ENCODE measurements at regions of chr12 and their contacts with region 1.

Region 1: DNA sequence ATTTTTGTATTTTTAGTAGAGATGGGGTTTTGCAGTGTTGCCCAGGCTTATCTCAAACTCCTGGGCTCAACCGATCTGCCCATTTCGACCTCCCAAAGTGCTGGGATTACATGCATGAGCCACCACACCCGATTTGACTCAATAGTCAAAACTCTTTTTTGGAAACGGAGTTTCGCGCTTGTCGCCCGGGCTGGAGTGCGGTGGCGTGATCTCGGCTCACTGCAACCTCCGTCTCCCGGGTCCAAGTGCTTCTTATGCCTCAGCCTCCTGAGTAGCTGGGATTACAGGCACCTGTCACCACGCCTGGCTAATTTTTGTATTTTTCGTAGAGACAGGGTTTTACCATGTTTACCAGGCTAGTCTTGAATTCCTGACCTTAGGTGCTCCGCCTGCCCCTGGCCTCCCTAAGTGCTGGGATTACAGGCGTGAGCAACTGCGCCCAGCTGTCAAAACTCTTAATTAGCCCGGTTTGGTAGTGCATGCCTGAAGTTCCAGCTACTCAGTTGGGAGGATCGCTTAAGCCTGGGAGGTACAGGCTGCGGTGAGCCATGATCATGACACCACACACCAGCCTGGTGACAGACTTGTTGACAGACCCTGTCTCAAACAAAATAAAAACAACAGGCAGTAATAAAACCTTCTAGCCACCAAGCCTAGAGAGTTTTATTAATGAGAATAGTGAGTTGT is 12.4 kb downstream of the MED21 start:
- DNase-seq: no peak
- H3K27ac ChIP-seq: no peak overlapping the region
- CTCF ChIP-seq: no peak

Region 2: DNA sequence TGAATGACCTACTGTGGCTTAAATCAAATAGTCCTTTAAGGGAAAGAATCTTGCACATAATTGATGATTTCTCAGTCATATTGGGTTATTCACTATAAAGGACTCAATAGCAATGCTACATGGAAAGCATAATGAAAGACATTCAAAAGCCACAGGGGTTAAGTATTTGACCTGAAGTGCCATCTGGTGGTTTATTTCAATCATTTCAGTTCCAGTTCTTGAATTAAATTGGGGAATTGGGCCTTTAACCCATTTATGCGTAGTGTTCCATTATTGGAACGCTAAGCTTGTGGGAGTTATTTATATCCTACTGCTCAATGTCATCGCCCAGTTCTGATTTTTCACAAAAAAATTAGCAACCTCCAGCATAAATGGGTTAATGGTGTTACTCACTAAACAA is 88.9 kb after region 1 on chr12:
- CTCF ChIA-PET with region 1: interaction called, 11 read pairs
- POLR2A ChIA-PET with region 1: no interaction called
- DNase-seq: peak; percentile 31
- H3K27ac ChIP-seq: no peak overlapping the region
- CTCF ChIP-seq: no peak

Measured in RWPE1 (cell line).